ENCODE measurements at regions of chr9 and their contacts with region 1.

Region 1: DNA sequence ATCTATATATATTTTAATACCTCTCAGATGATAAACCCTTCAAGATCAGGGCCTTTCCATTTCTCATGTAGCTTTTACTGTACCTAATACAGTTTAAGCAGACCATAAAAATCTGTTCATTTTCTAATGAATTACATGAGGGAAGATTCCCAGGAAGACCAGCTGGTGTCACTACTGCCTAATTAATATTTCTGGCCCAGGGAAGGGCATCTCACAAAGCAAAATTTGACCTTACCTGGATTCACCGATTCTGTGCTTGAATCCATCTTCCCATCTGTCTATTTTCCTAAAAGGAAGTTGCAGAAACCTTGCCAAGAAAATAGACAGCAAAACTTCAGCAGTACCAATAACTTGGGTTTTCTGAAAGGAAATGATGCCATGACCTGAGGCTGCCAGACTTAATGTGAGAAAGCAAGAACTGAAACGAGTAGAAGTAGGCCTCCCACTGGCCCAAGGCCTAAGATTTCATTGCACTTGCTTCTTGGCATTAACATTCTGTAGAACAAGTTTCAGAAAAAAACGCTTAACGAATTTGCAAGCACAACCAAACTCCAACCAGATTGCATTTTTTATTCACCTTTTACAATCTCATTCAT is 83.0 kb upstream of the GLIS3 start:
- DNase-seq: peak in 3 of 9 experiments; percentile 20 to 60 (median 45)
- ATAC-seq: peak; percentile 42
- H3K4me3 ChIP-seq: no peak overlapping the region
- H3K4me3 Mint-ChIP-seq: no peak overlapping the region
- H3K27ac ChIP-seq: no peak overlapping the region
- H3K27ac Mint-ChIP-seq: no peak overlapping the region
- H3K4me1 ChIP-seq: no peaks in the 10 kb centered on the region
- H3K4me1 Mint-ChIP-seq: peaks cover 3% of the 10 kb centered on the region
- H3K27me3 ChIP-seq: peaks cover 0 to 2% of the 10 kb centered on the region in 2 experiments
- H3K27me3 Mint-ChIP-seq: no peaks in the 10 kb centered on the region
- CTCF ChIP-seq: peak; percentile 53

Region 2: GRCh38 chr9:3906432-3907213 is 476.2 kb before region 1 on chr9:
- CTCF ChIA-PET with region 1: no interaction called
- POLR2A ChIA-PET with region 1: no interaction called
- intact Hi-C with region 1: no loop called
- DNase-seq: no peak
- ATAC-seq: no peak
- H3K4me3 ChIP-seq: no peak overlapping the region
- H3K4me3 Mint-ChIP-seq: no peak overlapping the region
- H3K27ac ChIP-seq: no peak overlapping the region
- H3K27ac Mint-ChIP-seq: no peak overlapping the region
- H3K4me1 ChIP-seq: no peaks in the 10 kb centered on the region
- H3K4me1 Mint-ChIP-seq: no peaks in the 10 kb centered on the region
- H3K27me3 ChIP-seq: no peaks in the 10 kb centered on the region
- H3K27me3 Mint-ChIP-seq: no peaks in the 10 kb centered on the region
- CTCF ChIP-seq: no peak

Region 3: DNA sequence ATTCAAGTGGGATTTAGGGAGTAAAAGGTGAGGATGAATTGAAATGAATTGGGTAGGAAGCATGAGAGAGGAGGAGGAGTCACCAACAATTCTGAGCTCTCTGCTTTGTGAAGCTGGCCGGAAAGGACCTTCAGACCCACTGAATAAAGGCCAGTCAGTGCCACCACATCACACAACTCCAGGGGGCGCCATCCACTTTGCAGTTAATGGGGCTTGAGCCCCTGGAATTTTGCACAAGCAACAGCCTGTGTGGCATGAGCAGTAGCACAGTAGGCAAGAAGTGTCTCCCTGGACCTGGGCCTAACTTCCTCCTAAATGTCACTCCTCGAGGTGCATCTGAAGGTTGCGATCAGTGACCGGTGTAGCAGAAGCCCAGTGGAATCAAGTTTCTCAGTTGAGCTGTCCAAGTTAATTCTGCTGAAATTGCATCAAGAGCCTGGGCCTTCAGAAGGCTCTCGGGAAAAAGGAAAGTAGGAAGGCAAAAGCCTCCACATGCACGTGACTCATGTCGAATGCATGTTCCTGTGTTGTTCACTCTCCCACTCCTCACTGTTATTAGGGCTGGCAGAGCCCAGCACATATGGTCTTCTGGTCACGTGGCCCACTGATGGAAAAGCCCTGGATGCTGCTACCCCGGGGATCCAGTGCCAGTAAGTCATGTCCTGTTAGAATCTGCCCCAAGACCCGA is 55.2 kb before region 1 on chr9:
- CTCF ChIA-PET with region 1: no interaction called
- POLR2A ChIA-PET with region 1: no interaction called
- intact Hi-C with region 1: no loop called
- DNase-seq: no peak
- ATAC-seq: no peak
- H3K4me3 ChIP-seq: no peak overlapping the region
- H3K4me3 Mint-ChIP-seq: no peak overlapping the region
- H3K27ac ChIP-seq: no peak overlapping the region
- H3K27ac Mint-ChIP-seq: no peak overlapping the region
- H3K4me1 ChIP-seq: peaks cover 44% of the 10 kb centered on the region
- H3K4me1 Mint-ChIP-seq: peaks cover 40% of the 10 kb centered on the region
- H3K27me3 ChIP-seq: no peaks in the 10 kb centered on the region
- H3K27me3 Mint-ChIP-seq: no peaks in the 10 kb centered on the region
- CTCF ChIP-seq: no peak

Region 4: DNA sequence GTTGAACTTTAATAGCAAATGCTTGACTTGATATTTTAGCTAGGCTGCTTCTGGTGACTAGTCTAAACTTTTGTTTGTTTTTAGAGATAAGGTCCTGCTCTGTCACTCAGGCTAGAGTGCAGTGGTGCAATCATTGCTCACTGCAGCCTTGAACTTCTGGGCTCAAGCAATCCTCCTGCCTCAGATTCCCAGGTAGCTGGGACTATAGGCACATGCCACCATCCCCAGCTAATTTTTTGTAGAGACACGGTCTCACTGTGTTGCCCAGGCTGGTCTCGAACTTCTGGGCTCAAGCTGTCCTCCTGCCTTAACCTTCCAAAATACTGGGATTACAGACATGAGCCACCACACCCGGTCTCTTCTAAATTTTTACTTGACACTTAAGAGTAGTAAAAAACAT is 317.3 kb after region 1 on chr9:
- CTCF ChIA-PET with region 1: no interaction called
- POLR2A ChIA-PET with region 1: no interaction called
- intact Hi-C with region 1: no loop called
- DNase-seq: no peak
- ATAC-seq: no peak
- H3K4me3 ChIP-seq: no peak overlapping the region
- H3K4me3 Mint-ChIP-seq: no peak overlapping the region
- H3K27ac ChIP-seq: no peak overlapping the region
- H3K27ac Mint-ChIP-seq: peak overlapping the region; percentile 22
- H3K4me1 ChIP-seq: no peaks in the 10 kb centered on the region
- H3K4me1 Mint-ChIP-seq: peaks cover 19% of the 10 kb centered on the region
- H3K27me3 ChIP-seq: no peaks in the 10 kb centered on the region
- H3K27me3 Mint-ChIP-seq: no peaks in the 10 kb centered on the region
- CTCF ChIP-seq: no peak

Region 5: DNA sequence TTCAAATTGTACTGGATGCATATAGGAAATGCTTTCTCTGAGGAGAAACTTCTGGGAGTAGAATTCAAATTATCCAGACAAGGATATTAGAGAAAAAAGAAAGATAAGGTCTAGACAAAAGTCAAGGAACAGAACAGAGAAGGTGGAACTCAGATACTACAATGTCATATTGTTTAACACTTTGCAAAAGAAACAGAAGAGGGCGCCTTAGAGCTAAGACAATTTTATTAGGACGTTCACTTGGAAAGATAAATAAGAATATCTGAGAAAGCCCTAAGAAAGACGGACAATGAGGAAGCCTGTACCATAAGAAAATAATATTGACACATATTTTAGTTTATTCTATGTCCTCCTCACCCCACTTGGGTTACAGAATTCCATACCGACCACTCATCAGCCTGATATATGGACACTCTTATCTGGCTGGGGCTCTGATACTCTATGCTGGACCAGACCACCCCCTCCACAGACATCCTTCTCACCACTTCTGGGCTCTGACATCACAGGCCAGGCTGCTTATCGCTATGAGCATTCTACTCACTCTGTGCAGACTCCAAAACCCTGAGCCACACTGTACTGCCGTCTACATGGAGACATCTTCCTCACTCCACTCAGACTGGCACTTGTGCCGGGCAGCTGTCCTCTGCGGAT is 367.3 kb after region 1 on chr9:
- CTCF ChIA-PET with region 1: no interaction called
- POLR2A ChIA-PET with region 1: no interaction called
- intact Hi-C with region 1: loop called (anchors 5 kb)
- DNase-seq: peak in 2 of 9 experiments; percentile 48 to 58
- ATAC-seq: peak; percentile 58
- H3K4me3 ChIP-seq: no peak overlapping the region
- H3K4me3 Mint-ChIP-seq: no peak overlapping the region
- H3K27ac ChIP-seq: no peak overlapping the region
- H3K27ac Mint-ChIP-seq: no peak overlapping the region
- H3K4me1 ChIP-seq: no peaks in the 10 kb centered on the region
- H3K4me1 Mint-ChIP-seq: peaks cover 3% of the 10 kb centered on the region
- H3K27me3 ChIP-seq: no peaks in the 10 kb centered on the region
- H3K27me3 Mint-ChIP-seq: no peaks in the 10 kb centered on the region
- CTCF ChIP-seq: peak; percentile 72

Region 6: GRCh38 chr9:4923580-4924544 is 541.0 kb after region 1 on chr9:
- CTCF ChIA-PET with region 1: no interaction called
- POLR2A ChIA-PET with region 1: no interaction called
- intact Hi-C with region 1: loop called in 1 of 2 experiments (anchors 5 kb)
- DNase-seq: peak in 3 of 9 experiments; percentile 9 to 55 (median 49)
- ATAC-seq: peak; percentile 46
- H3K4me3 ChIP-seq: no peak overlapping the region
- H3K4me3 Mint-ChIP-seq: no peak overlapping the region
- H3K27ac ChIP-seq: no peak overlapping the region
- H3K27ac Mint-ChIP-seq: no peak overlapping the region
- H3K4me1 ChIP-seq: no peaks in the 10 kb centered on the region
- H3K4me1 Mint-ChIP-seq: peaks cover 2% of the 10 kb centered on the region
- H3K27me3 ChIP-seq: no peaks in the 10 kb centered on the region
- H3K27me3 Mint-ChIP-seq: no peaks in the 10 kb centered on the region
- CTCF ChIP-seq: peak; percentile 37

Region 7: GRCh38 chr9:5608298-5609225 is 1225.7 kb after region 1 on chr9:
- CTCF ChIA-PET with region 1: no interaction called
- POLR2A ChIA-PET with region 1: no interaction called
- intact Hi-C with region 1: loop called in 1 of 2 experiments (anchors 10 kb)
- DNase-seq: peak in 1 of 9 experiments; percentile 25
- ATAC-seq: peak; percentile 63
- H3K4me3 ChIP-seq: peak overlapping the region; percentile 17 to 20
- H3K4me3 Mint-ChIP-seq: peak overlapping the region; percentile 82
- H3K27ac ChIP-seq: no peak overlapping the region
- H3K27ac Mint-ChIP-seq: peak overlapping the region; percentile 83
- H3K4me1 ChIP-seq: peaks cover 6% of the 10 kb centered on the region
- H3K4me1 Mint-ChIP-seq: peaks cover 36% of the 10 kb centered on the region
- H3K27me3 ChIP-seq: no peaks in the 10 kb centered on the region
- H3K27me3 Mint-ChIP-seq: no peaks in the 10 kb centered on the region
- CTCF ChIP-seq: no peak